ENCODE measurements at regions of chr18 and their contacts with region 1.

Region 1: DNA sequence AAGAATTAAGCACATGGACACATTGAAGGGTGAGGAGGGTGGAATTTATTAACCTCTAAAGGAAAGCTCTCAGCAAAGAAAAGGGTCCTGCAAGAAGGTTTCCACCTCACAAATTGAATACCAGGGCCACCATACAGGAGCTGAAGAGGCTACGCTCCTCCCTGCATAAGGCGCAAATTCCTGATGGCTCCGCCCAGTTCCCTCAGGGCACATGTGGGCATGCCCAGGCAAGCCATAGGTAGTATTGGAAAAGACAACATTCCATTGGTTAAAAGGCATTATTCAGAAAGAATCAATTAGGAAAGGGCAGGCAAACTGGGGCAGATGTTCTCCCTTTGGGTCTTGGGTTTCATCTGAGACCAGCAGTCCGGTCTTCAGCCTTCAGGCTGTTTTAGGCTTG is 161.2 kb downstream of the PTPRM start:
- DNase-seq: no peak
- ATAC-seq: no peak
- H3K4me3 ChIP-seq: no peak overlapping the region
- H3K27ac ChIP-seq: no peak overlapping the region
- H3K4me1 ChIP-seq: no peaks in the 10 kb centered on the region
- H3K27me3 ChIP-seq: no peaks in the 10 kb centered on the region
- CTCF ChIP-seq: no peak
- POLR2A ChIP-seq: no peak
- RAD21 ChIP-seq: no peak

Region 2: DNA sequence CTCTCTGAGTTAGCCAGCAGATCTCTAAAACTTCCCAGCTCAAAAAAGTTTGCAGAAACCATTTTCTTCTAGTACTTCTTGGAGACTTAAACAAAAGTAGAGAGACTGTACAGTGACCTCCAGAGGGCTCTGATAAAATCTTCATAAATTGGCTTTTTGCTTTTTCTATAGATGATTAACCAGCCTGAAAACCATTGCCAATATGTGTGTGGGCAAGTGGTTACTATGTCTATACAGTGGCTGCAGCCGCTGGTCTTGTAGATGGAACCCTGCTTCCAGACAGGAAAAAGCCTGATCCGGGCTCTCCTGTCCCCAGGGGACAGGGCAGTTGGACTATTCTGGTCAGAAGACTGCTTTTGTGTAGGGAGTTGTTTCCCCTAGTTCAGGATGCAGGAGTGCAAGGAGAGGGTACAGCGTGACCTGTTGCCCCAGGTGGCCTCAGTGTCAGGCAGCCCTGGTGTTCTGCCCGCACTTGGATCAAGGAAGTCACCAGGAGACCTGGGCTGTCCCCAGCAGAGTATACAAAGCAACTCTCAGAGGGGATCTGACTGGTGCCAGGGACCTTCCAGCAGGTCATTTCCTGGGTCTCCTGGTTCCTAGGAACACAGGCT is 168.5 kb before region 1 on chr18:
- CTCF ChIA-PET with region 1: no interaction called
- POLR2A ChIA-PET with region 1: no interaction called
- dilution Hi-C with region 1: no loop called
- in situ Hi-C with region 1: no loop called
- intact Hi-C with region 1: no loop called
- DNase-seq: no peak
- ATAC-seq: no peak
- H3K4me3 ChIP-seq: no peak overlapping the region
- H3K27ac ChIP-seq: no peak overlapping the region
- H3K4me1 ChIP-seq: peaks cover 4% of the 10 kb centered on the region
- H3K27me3 ChIP-seq: peaks cover 9% of the 10 kb centered on the region
- CTCF ChIP-seq: no peak
- POLR2A ChIP-seq: no peak
- RAD21 ChIP-seq: no peak

Region 3: DNA sequence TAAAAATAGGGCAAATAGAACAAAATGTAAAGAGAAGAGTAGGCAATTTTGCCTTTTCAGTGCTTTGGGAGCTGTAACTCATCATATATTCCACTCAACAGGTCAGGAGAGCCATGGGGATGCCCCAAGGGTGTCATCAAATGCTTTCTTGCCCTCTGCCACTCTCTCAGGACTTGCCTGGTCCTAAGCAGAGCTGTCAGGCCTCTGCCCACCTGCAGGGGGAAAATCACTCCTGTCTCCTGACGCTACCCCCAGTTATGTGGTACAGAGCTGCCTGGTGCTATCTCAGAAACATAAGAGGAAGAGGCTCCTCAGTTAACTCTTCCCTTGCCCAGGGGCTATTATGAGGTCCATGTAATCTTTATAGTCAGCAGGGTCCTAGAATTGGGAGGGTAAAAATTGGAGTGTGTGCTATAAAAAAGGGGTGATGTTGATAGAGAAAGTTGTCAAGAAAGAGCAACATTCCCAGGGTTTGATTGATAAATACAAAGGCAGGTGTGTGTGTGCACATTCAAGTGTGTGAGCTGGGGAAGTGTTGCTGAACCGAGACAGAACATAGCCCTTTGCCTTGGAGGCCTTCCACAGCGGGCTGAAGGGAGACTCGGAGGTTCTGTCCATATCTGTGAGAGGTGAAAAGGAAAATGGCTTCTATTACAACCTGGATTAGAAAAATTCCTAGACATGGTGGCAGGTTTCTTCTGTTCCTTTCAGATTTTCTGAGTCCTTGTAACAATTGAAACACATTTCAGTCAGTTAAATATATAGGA is 135.8 kb before region 1 on chr18:
- CTCF ChIA-PET with region 1: no interaction called
- POLR2A ChIA-PET with region 1: interaction called, 12 read pairs
- dilution Hi-C with region 1: no loop called
- in situ Hi-C with region 1: no loop called
- intact Hi-C with region 1: no loop called
- DNase-seq: no peak
- ATAC-seq: no peak
- H3K4me3 ChIP-seq: no peak overlapping the region
- H3K27ac ChIP-seq: no peak overlapping the region
- H3K4me1 ChIP-seq: peaks cover 4% of the 10 kb centered on the region
- H3K27me3 ChIP-seq: no peaks in the 10 kb centered on the region
- CTCF ChIP-seq: no peak
- POLR2A ChIP-seq: no peak
- RAD21 ChIP-seq: no peak

Region 4: DNA sequence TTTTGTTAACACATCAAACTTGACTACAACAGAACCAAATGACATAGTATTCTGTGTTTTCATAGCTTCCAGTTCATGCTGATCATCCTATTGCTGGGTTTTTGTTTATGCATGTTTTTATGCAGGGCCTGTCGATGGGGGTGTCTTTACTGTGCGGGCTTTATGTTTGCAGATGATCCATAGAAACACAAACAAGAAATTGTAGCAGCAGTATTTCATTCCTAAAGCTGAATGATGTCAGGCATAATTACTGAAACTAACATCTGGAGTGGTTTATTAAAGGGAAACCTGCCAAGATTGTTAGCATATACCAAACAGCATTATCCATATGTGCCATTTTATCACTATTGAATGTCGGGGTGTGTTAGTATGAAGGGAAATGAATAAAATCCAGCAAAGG is 31.5 kb before region 1 on chr18:
- CTCF ChIA-PET with region 1: no interaction called
- POLR2A ChIA-PET with region 1: no interaction called
- dilution Hi-C with region 1: no loop called
- in situ Hi-C with region 1: no loop called
- intact Hi-C with region 1: no loop called
- DNase-seq: peak; percentile 13
- ATAC-seq: peak; percentile 75
- H3K4me3 ChIP-seq: no peak overlapping the region
- H3K27ac ChIP-seq: no peak overlapping the region
- H3K4me1 ChIP-seq: peaks cover 2% of the 10 kb centered on the region; the same call in 1 of the 2 replicates
- H3K27me3 ChIP-seq: no peaks in the 10 kb centered on the region
- CTCF ChIP-seq: no peak
- POLR2A ChIP-seq: no peak
- RAD21 ChIP-seq: no peak